ENCODE measurements at regions of chr13 and their contacts with region 1.

Region 1: GRCh38 chr13:99436686-99437416 is 64.4 kb upstream of the TM9SF2 start:
- DNase-seq: peak; percentile 91 to 96 (median 93)
- H3K4me3 ChIP-seq: peak overlapping the region; percentile 40
- H3K4me3 Mint-ChIP-seq: peak overlapping the region; percentile 29 to 76 (median 66)
- H3K27ac ChIP-seq: no peak overlapping the region
- H3K27ac Mint-ChIP-seq: peak overlapping the region; percentile 48 to 96 (median 86)
- H3K4me1 ChIP-seq: peaks cover 53% of the 10 kb centered on the region
- H3K4me1 Mint-ChIP-seq: peaks cover 55 to 62% (median 59%) of the 10 kb centered on the region in 3 donors
- H3K27me3 ChIP-seq: no peaks in the 10 kb centered on the region
- H3K27me3 Mint-ChIP-seq: no peaks in the 10 kb centered on the region

Region 2: DNA sequence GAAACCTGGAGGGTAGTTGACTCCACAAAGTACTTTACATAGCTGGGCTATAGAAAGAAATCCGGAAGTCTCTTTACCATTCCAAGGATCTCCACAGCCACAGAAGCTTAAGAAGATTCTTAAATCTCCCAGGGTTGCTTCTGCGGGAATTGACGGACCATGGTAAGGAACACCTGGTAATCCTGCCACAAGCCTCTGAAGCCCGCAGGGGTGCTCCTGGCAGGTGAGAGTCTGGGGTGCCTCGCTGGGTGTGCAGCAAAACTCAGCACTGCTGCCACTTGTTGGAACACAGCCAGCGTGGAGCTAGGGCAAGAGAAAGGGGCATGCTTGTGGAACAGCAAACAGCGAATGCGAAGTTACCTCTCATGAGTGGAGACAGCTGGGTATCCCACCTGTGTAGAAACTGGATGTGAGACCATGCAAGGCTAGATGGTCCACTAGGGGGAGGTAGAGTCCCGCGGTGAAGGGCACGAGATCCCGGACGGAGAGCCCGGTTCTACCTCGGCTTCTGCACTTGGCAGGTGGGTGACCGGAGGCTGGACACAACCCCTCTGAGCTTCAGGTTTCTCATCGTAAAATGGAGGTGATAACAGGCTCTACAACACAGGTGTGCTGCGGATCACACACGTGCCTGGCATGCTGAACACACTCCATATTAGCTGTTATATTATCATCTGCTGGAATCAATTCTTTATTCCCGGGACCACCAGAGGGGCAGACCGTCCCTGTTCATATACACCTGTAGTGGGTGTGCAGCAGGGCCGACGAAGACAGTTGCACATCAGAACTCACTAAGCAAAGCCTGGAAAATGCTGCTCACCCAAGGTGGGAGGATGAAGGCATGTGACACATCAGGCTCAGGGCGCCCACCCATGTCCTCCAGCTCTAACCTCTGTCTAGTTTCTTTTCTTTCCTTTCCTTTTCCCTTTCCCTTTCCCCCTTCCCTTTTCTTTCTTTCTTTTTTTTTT is 260.3 kb before region 1 on chr13:
- CTCF ChIA-PET with region 1: interaction called, 29 read pairs
- POLR2A ChIA-PET with region 1: no interaction called
- DNase-seq: peak; percentile 69 to 83 (median 72)
- H3K4me3 ChIP-seq: peak overlapping the region; percentile 49
- H3K4me3 Mint-ChIP-seq: peak overlapping the region; percentile 12 to 86 (median 77)
- H3K27ac ChIP-seq: no peak overlapping the region
- H3K27ac Mint-ChIP-seq: peak overlapping the region in 7 of 8 donors; percentile 4 to 94 (median 53)
- H3K4me1 ChIP-seq: peaks cover 33% of the 10 kb centered on the region
- H3K4me1 Mint-ChIP-seq: peaks cover 39 to 49% (median 42%) of the 10 kb centered on the region in 3 donors
- H3K27me3 ChIP-seq: no peaks in the 10 kb centered on the region
- H3K27me3 Mint-ChIP-seq: peaks cover 0 to 2% of the 10 kb centered on the region in 2 donors

Region 3: GRCh38 chr13:99296398-99296797 is 140.5 kb before region 1 on chr13:
- CTCF ChIA-PET with region 1: interaction called, 22 read pairs
- POLR2A ChIA-PET with region 1: no interaction called
- DNase-seq: peak in 2 of 5 donors; percentile 46 to 53
- H3K4me3 ChIP-seq: peak overlapping the region; percentile 3
- H3K4me3 Mint-ChIP-seq: peak overlapping the region; percentile 72 to 87 (median 81)
- H3K27ac ChIP-seq: no peak overlapping the region
- H3K27ac Mint-ChIP-seq: peak overlapping the region; percentile 71 to 99 (median 92)
- H3K4me1 ChIP-seq: peaks cover 83% of the 10 kb centered on the region
- H3K4me1 Mint-ChIP-seq: peaks cover 73 to 95% (median 94%) of the 10 kb centered on the region in 3 donors
- H3K27me3 ChIP-seq: no peaks in the 10 kb centered on the region
- H3K27me3 Mint-ChIP-seq: no peaks in the 10 kb centered on the region

Region 4: GRCh38 chr13:99335603-99336002 is 101.2 kb before region 1 on chr13:
- CTCF ChIA-PET with region 1: interaction called, 10 read pairs
- POLR2A ChIA-PET with region 1: no interaction called
- DNase-seq: no peak
- H3K4me3 ChIP-seq: no peak overlapping the region
- H3K4me3 Mint-ChIP-seq: no peak overlapping the region
- H3K27ac ChIP-seq: no peak overlapping the region
- H3K27ac Mint-ChIP-seq: peak overlapping the region in 3 of 8 donors; percentile 11 to 63 (median 63)
- H3K4me1 ChIP-seq: peaks cover 41% of the 10 kb centered on the region
- H3K4me1 Mint-ChIP-seq: peaks cover 72 to 94% (median 84%) of the 10 kb centered on the region in 3 donors
- H3K27me3 ChIP-seq: no peaks in the 10 kb centered on the region
- H3K27me3 Mint-ChIP-seq: no peaks in the 10 kb centered on the region

Region 5: DNA sequence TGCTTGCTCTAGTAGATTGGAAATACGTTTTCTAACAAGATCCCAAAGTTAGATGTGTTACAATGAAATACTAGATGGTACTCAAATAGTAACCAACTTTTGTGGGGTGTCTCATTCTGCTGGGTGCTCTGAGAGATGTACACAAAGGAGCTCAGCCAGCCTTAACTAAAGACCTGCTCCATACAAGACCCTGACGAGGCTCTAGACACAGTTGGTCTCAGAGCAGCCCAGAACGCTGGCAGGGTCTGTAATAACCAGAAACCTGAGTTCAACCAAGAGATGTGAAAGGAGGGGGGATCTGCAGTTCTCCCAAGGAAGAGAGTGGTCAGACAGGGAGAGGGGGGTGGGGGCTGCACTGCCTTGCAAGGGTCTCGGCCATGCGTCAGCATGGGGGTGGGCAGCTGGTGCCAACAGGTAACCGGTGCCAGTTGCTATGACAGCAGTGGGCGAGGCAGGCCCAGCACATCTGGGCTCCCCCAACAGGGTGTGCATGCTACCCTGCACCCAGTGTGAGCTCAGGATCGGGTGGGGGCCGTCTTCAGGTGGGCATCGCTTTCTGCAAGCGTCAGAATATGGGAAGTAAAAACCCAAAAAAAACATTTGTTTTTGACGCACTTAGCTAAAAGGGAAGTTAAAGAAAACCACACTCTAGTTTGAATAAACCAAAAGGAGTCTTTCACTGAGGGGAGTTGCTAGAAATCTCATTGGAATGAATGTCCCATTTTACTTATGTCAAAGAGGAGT is 61.7 kb before region 1 on chr13:
- CTCF ChIA-PET with region 1: interaction called, 60 read pairs
- POLR2A ChIA-PET with region 1: interaction called, 3 read pairs
- DNase-seq: peak in 4 of 5 donors; percentile 37 to 91 (median 88)
- H3K4me3 ChIP-seq: peak overlapping the region; percentile 15
- H3K4me3 Mint-ChIP-seq: peak overlapping the region; percentile 55 to 83 (median 75)
- H3K27ac ChIP-seq: peak overlapping the region; percentile 33
- H3K27ac Mint-ChIP-seq: peak overlapping the region; percentile 92 to 99 (median 97)
- H3K4me1 ChIP-seq: peaks cover 90% of the 10 kb centered on the region
- H3K4me1 Mint-ChIP-seq: peaks cover 82 to 98% (median 97%) of the 10 kb centered on the region in 3 donors
- H3K27me3 ChIP-seq: no peaks in the 10 kb centered on the region
- H3K27me3 Mint-ChIP-seq: peaks cover 0 to 4% of the 10 kb centered on the region in 2 donors

Region 6: GRCh38 chr13:99425485-99426341 is 11.1 kb before region 1 on chr13:
- CTCF ChIA-PET with region 1: interaction called, 108 read pairs
- POLR2A ChIA-PET with region 1: interaction called, 5 read pairs
- DNase-seq: peak in 4 of 5 donors; percentile 29 to 64 (median 48)
- H3K4me3 ChIP-seq: peak overlapping the region; percentile 48
- H3K4me3 Mint-ChIP-seq: peak overlapping the region; percentile 38 to 84 (median 69)
- H3K27ac ChIP-seq: no peak overlapping the region
- H3K27ac Mint-ChIP-seq: peak overlapping the region; percentile 81 to 97 (median 92)
- H3K4me1 ChIP-seq: peaks cover 68% of the 10 kb centered on the region
- H3K4me1 Mint-ChIP-seq: peaks cover 37 to 62% (median 51%) of the 10 kb centered on the region in 3 donors
- H3K27me3 ChIP-seq: no peaks in the 10 kb centered on the region
- H3K27me3 Mint-ChIP-seq: no peaks in the 10 kb centered on the region